ENCODE measurements at regions of chr22 and their contacts with region 1.

Region 1: GRCh38 chr22:19304547-19304946 is 13.0 kb upstream of the CLTCL1 start:
- DNase-seq: no peak
- ATAC-seq: no peak
- H3K4me3 ChIP-seq: no peak overlapping the region
- H3K4me3 Mint-ChIP-seq: no peak overlapping the region
- H3K27ac ChIP-seq: no peak overlapping the region
- H3K27ac Mint-ChIP-seq: no peak overlapping the region
- H3K4me1 ChIP-seq: no peaks in the 10 kb centered on the region
- H3K4me1 Mint-ChIP-seq: no peaks in the 10 kb centered on the region
- H3K27me3 ChIP-seq: peaks cover 0 to 7% of the 10 kb centered on the region in 2 experiments
- H3K27me3 Mint-ChIP-seq: peaks cover 0 to 5% of the 10 kb centered on the region in 2 donors

Region 2: GRCh38 chr22:19291580-19292457 is 12.7 kb before region 1 on chr22 and contains the start of gene CLTCL1:
- CTCF ChIA-PET with region 1: no interaction called
- POLR2A ChIA-PET with region 1: interaction called in 1 of 2 experiments, 12 read pairs
- DNase-seq: peak; percentile 7 to 72 (median 35)
- ATAC-seq: peak; percentile 77 to 85 (median 79)
- H3K4me3 ChIP-seq: peak within 1 kb of the TSS; percentile 68 to 84
- H3K4me3 Mint-ChIP-seq: peak within 1 kb of the TSS; percentile 85 to 89 (median 86)
- H3K27ac ChIP-seq: no peak within 1 kb of the TSS
- H3K27ac Mint-ChIP-seq: peak within 1 kb of the TSS; percentile 19 to 58
- H3K4me1 ChIP-seq: peaks cover 5 to 19% of the 10 kb centered on the region in 2 experiments
- H3K4me1 Mint-ChIP-seq: peaks cover 14 to 27% (median 23%) of the 10 kb centered on the region in 3 donors
- H3K27me3 ChIP-seq: peaks cover 0 to 23% of the 10 kb centered on the region in 2 experiments
- H3K27me3 Mint-ChIP-seq: peaks cover 19 to 30% of the 10 kb centered on the region in 2 donors
- total RNA-seq, gene CLTCL1: 0.63 to 3.9 (median 1.6) TPM

Region 3: GRCh38 chr22:19419086-19419463 is 114.5 kb after region 1 on chr22:
- CTCF ChIA-PET with region 1: no interaction called
- POLR2A ChIA-PET with region 1: no interaction called
- DNase-seq: peak in 11 of 35 experiments; percentile 3 to 40 (median 21)
- ATAC-seq: no peak
- H3K4me3 ChIP-seq: no peak overlapping the region
- H3K4me3 Mint-ChIP-seq: peak overlapping the region in 1 of 3 donors; percentile 58
- H3K27ac ChIP-seq: peak overlapping the region; percentile 92
- H3K27ac Mint-ChIP-seq: peak overlapping the region; percentile 88 to 93
- H3K4me1 ChIP-seq: peaks cover 12 to 52% of the 10 kb centered on the region in 2 experiments
- H3K4me1 Mint-ChIP-seq: peaks cover 59 to 68% (median 67%) of the 10 kb centered on the region in 3 donors
- H3K27me3 ChIP-seq: no peaks in the 10 kb centered on the region
- H3K27me3 Mint-ChIP-seq: no peaks in the 10 kb centered on the region